MCF 10A (cell line): ENCODE measurements at regions of chr5 and their contacts with region 1.

Region 1: DNA sequence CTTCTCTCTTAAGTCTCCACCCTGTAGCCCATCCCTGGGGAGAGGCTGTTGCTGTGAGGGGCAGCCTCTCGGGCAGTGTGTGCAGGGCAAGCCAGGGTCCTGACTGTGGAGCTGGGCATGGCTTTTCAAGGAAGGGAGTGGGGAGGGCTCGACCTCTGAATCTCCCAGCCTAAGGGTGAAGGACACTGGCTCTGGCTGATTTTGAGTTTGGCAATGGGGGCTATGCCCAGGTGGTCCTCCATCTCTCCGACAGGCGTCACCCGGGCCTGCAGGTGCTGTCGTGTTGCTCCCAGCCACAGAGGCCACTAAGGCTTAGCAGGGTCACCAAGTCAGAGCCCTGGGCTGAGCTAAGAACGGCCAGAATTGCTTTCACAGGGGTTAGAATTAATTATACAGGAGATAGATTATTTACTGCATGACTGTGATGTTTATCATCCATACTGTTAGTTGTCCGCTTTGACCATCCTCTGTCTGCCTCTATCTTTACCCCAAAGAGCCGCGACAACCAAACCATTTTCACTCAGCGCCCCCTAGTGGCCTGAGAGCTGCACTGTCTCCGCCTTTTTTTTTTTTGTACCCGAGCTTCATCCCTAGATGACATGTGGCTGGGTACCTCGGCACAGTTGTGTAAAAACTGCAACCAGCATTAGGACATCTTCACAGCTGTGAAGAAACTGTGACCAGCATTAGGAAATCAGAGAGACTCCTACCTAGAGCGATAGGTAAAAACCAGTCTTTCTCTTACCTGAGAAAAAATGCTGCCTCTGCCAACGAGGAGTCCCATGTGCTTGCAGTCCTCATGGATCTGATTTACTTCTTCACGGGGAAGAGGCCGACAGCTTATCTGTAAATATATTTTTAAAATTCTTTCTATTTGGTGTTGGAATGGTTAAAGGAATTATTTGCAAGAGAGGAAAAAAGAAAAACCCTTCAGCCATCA is 44.5 kb downstream of the AGXT2 start:
- DNase-seq: peak; percentile 85
- H3K4me3 Mint-ChIP-seq: no peak overlapping the region
- H3K27ac Mint-ChIP-seq: no peak overlapping the region
- H3K4me1 Mint-ChIP-seq: no peaks in the 10 kb centered on the region
- H3K27me3 Mint-ChIP-seq: peaks cover 39% of the 10 kb centered on the region
- CTCF ChIP-seq: peak; percentile 92

Region 2: DNA sequence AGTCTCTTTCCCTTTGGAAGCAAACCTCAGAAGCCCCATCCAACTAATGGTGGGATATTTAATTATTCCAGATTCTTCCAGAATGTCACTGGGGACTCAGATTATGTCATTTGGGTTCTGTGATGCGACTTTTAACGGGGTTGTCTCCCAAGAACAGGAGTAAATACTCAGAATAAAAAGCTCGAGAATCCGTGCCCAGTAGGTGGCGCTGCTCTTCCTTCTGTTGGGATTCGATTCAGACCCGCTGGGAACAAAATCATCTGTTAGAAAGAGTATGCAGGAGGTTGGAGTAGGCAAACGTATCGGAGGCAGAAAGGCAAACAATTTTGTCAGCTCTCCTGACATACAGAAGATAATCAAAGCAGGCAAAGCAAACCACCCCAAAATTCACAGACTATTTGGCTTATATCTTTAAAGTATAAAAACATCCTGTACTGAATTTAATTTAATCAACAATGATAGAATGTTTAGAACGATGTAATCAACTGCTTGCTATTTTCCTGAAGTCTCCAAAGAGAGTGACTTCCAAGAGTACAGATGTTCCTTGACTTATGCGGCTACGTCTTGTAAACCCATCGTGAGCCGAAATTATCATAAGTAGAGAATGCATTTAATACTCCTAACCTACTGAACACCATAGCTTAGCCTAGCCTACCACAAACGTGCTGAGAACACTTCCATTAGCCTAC is 517.0 kb before region 1 on chr5:
- CTCF ChIA-PET with region 1: interaction called, 6 read pairs
- POLR2A ChIA-PET with region 1: no interaction called
- intact Hi-C with region 1: loop called (anchors 1 kb)
- DNase-seq: peak; percentile 91
- H3K4me3 Mint-ChIP-seq: no peak overlapping the region
- H3K27ac Mint-ChIP-seq: no peak overlapping the region
- H3K4me1 Mint-ChIP-seq: peaks cover 29% of the 10 kb centered on the region
- H3K27me3 Mint-ChIP-seq: peaks cover 4% of the 10 kb centered on the region
- CTCF ChIP-seq: peak; percentile 74

Region 3: GRCh38 chr5:34817563-34818351 is 185.5 kb before region 1 on chr5:
- CTCF ChIA-PET with region 1: no interaction called
- POLR2A ChIA-PET with region 1: no interaction called
- intact Hi-C with region 1: no loop called
- DNase-seq: no peak
- H3K4me3 Mint-ChIP-seq: no peak overlapping the region
- H3K27ac Mint-ChIP-seq: peak overlapping the region; percentile 9
- H3K4me1 Mint-ChIP-seq: no peaks in the 10 kb centered on the region
- H3K27me3 Mint-ChIP-seq: no peaks in the 10 kb centered on the region
- CTCF ChIP-seq: no peak

Region 4: GRCh38 chr5:34929150-34929719 is 74.1 kb before region 1 on chr5 and contains the start of gene DNAJC21:
- CTCF ChIA-PET with region 1: interaction called, 4 read pairs
- POLR2A ChIA-PET with region 1: no interaction called
- intact Hi-C with region 1: loop called (anchors 1 kb)
- DNase-seq: peak; percentile 98
- H3K4me3 Mint-ChIP-seq: peak within 1 kb of the TSS; percentile 99
- H3K27ac Mint-ChIP-seq: peak within 1 kb of the TSS; percentile 98
- H3K4me1 Mint-ChIP-seq: peaks cover 14% of the 10 kb centered on the region
- H3K27me3 Mint-ChIP-seq: no peaks in the 10 kb centered on the region
- CTCF ChIP-seq: no peak
- total RNA-seq, gene DNAJC21: 62.3 and 64.6 TPM in 2 replicates

Region 5: DNA sequence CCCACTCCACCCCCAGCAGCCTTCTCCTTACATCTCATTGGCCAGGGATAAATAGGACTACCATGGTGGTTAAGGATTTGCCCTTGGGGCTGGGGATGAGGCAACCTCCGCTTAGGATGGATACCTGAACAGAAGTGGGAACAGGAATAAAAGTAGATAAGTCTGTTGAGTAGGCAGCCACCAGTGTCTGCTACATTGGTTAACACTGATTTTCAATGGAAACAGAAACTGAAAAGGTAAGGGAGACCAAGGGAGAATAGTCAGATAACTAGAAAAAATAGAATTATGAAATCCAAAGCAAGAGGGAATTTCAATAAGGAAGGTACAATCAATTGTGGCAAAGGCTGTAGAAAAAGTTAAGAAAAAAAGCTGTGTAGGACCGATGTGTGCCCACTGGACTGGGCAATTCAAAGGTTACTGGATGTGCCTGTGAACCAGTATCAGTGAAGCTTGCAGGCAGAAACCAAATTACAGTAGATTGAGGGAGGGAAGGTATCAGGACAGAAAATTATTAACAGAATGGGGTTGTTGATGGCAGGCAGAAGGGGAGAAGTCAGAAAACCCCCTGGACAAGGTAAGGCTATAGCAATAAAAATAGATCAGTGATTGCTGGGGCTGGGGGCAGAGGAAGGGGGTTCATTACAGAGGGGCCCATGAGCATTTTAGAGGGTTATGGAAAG is 25.2 kb before region 1 on chr5:
- CTCF ChIA-PET with region 1: interaction called, 12 read pairs
- POLR2A ChIA-PET with region 1: no interaction called
- intact Hi-C with region 1: no loop called
- DNase-seq: no peak
- H3K4me3 Mint-ChIP-seq: no peak overlapping the region
- H3K27ac Mint-ChIP-seq: no peak overlapping the region
- H3K4me1 Mint-ChIP-seq: peaks cover 7% of the 10 kb centered on the region
- H3K27me3 Mint-ChIP-seq: no peaks in the 10 kb centered on the region
- CTCF ChIP-seq: no peak

Region 6: DNA sequence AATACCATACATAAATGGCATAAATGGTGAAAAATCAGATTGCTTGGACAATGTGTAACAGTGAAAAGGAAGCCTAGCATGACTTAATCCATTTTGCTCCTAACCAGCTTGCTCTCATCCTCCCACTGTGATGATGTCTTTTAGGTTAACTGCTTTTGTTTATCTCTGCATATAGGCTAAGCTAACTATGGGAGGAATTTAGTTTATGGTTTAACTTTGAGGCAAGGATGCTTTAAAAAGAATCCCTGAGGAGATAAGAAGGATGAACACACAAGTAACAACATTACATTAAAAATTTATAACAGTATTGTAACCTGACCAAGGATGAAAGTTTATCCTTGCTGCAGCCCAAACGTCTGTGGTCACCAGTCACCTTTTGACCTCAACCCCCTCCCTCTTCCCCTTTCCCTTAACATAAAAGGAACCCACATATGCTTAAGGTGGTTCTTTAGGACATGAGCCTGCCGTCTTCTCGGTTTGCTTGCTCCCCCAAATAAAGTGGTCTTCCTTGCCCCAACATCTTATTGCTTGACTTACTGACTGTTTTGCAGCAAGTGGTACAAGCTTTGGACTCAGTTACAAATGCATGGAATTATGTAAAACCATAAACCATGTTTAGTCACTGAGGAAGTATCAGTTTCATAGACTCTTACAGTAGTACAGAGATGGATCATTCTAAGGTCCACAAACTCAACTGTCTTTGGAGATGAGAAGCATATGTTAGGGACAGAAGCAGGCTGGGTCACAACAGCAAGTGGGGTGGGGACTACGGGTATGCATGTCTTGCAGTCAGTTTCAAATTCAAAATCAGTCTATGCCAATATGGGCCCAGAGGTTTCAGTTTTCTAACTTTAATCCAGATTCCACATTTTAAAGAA is 13.1 kb after region 1 on chr5:
- CTCF ChIA-PET with region 1: interaction called, 12 read pairs
- POLR2A ChIA-PET with region 1: no interaction called
- intact Hi-C with region 1: no loop called
- DNase-seq: no peak
- H3K4me3 Mint-ChIP-seq: no peak overlapping the region
- H3K27ac Mint-ChIP-seq: no peak overlapping the region
- H3K4me1 Mint-ChIP-seq: no peaks in the 10 kb centered on the region
- H3K27me3 Mint-ChIP-seq: peaks cover 10% of the 10 kb centered on the region
- CTCF ChIP-seq: no peak